ENCODE measurements at regions of chr22 and their contacts with region 1.

Region 1: GRCh38 chr22:39496131-39496838 is 5.8 kb upstream of the MIEF1 start:
- DNase-seq: peak; percentile 43
- H3K4me3 Mint-ChIP-seq: no peak overlapping the region
- H3K27ac Mint-ChIP-seq: no peak overlapping the region
- H3K4me1 Mint-ChIP-seq: peaks cover 8% of the 10 kb centered on the region
- H3K27me3 Mint-ChIP-seq: no peaks in the 10 kb centered on the region

Region 2: GRCh38 chr22:38802671-38803121 is 693.6 kb before region 1 on chr22:
- intact Hi-C with region 1: no loop called
- DNase-seq: no peak
- H3K4me3 Mint-ChIP-seq: no peak overlapping the region
- H3K27ac Mint-ChIP-seq: no peak overlapping the region
- H3K4me1 Mint-ChIP-seq: peaks cover 4% of the 10 kb centered on the region
- H3K27me3 Mint-ChIP-seq: peaks cover 32% of the 10 kb centered on the region

Region 3: DNA sequence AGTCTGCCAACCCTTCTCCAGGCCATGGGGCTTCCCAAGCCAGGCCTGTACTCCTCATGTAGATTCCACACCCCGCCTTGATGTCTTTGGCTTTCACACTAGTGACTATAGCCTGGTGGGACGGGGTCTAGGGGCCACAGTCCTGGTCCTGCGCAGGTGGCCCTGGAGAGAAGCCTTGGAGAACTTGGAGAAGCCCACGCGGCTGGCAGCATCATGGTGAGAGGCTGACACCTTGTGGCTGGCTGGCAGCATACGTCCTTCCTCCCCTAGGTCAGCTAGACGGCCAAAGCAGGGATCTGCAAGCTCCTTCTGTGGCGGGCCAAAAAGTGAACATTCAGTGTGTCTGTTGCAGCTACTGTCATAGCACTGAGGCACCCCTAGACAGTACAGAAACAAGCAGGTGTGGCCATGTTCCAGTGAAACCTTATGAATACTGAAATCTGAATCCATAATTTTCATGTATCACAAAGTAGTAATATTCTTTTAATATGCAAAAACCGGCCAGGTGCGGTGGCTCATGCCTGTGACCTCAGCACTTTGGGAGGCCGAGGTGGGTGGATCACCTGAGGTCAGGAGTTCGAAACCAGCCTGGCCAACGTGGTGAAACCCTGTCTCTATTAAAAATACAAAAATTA is 540.4 kb after region 1 on chr22:
- intact Hi-C with region 1: loop called (anchors 2 kb)
- DNase-seq: peak; percentile 50
- H3K4me3 Mint-ChIP-seq: no peak overlapping the region
- H3K27ac Mint-ChIP-seq: no peak overlapping the region
- H3K4me1 Mint-ChIP-seq: peaks cover 10% of the 10 kb centered on the region
- H3K27me3 Mint-ChIP-seq: peaks cover 12% of the 10 kb centered on the region